ENCODE measurements at regions of chr13 and their contacts with region 1.

Region 1: GRCh38 chr13:20703780-20704445 is 414 bp downstream of the IL17D start:
- DNase-seq: peak in 41 of 42 donors; percentile 47 to 88 (median 75)

Region 2: DNA sequence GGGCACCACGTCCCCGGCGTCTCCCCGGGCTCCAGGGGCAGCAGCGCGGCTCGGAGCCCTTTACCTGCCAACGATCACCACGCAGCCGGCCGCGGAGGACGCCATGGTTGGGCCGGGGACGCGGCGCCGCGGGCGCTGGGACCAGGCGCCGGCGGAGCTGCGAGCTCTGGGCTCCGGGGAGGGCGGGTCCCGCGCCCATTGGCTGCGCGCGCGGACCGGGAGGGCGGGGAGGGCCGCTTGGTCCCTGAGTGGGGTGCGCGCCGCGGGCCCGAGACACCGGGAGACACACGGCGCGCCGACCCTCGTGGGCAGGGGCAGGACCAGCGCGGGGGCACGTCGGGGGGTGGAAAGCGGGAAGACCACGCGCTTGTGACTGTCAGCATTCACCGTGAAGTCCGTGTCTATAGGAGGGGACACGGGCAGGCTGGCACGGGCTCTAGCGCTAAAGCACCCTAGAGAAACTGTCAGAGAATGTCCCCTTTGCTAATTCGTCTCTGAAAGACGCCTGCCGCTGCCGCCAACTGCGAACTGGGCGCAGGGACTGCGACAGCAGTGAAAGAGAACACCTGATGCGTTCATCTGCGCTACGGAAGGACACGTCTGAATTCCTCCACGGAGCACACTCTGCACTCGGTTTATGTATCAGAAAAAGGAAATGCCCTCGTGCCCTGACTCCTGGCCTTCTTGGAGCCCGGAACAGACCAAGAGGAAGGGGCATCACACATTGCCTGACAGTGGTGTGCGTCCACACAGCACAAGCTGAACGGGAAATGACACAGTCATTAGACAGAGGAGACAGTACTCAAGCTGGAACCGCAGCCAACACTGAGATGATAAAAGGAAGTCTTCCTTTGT is 178.0 kb before region 1 on chr13 and contains the start of gene CRYL1:
- intact Hi-C with region 1: loop called (anchors 10 kb)
- DNase-seq: peak; percentile 60 to 95 (median 89)

Region 3: GRCh38 chr13:20566898-20567874 is 136.7 kb before region 1 on chr13 and contains the start of gene IFT88:
- intact Hi-C with region 1: loop called (anchors 5 kb)
- DNase-seq: peak; percentile 63 to 97 (median 91)

Region 4: GRCh38 chr13:20902438-20903163 is 198.7 kb after region 1 on chr13 and contains the start of gene XPO4:
- intact Hi-C with region 1: loop called (anchors 10 kb)
- DNase-seq: peak; percentile 44 to 90 (median 81)

Measured in head of caudate nucleus (tissue), 42 donors.